Endothelial cell of umbilical vein (primary cell): ENCODE measurements at regions of chr11 and their contacts with region 1.

Region 1: GRCh38 chr11:123560006-123560405 is 94.4 kb downstream of the SCN3B start:
- DNase-seq: no peak
- H3K4me3 ChIP-seq: no peak overlapping the region
- H3K27ac ChIP-seq: no peak overlapping the region
- H3K4me1 ChIP-seq: no peaks in the 10 kb centered on the region
- H3K27me3 ChIP-seq: peaks cover 0 to 9% of the 10 kb centered on the region in 2 experiments
- CTCF ChIP-seq: no peak
- POLR2A ChIP-seq: no peak

Region 2: GRCh38 chr11:123301696-123302400 is 258.2 kb before region 1 on chr11:
- CTCF ChIA-PET with region 1: interaction called, 6 read pairs
- POLR2A ChIA-PET with region 1: no interaction called
- dilution Hi-C with region 1: no loop called
- intact Hi-C with region 1: loop called (anchors 5 kb)
- DNase-seq: peak; percentile 43
- H3K4me3 ChIP-seq: peak overlapping the region in 2 of 3 experiments; percentile 15 to 29
- H3K27ac ChIP-seq: no peak overlapping the region
- H3K4me1 ChIP-seq: peaks cover 17% of the 10 kb centered on the region
- H3K27me3 ChIP-seq: peaks cover 4 to 6% of the 10 kb centered on the region in 2 experiments
- CTCF ChIP-seq: peak; percentile 81 to 84
- POLR2A ChIP-seq: no peak

Region 3: DNA sequence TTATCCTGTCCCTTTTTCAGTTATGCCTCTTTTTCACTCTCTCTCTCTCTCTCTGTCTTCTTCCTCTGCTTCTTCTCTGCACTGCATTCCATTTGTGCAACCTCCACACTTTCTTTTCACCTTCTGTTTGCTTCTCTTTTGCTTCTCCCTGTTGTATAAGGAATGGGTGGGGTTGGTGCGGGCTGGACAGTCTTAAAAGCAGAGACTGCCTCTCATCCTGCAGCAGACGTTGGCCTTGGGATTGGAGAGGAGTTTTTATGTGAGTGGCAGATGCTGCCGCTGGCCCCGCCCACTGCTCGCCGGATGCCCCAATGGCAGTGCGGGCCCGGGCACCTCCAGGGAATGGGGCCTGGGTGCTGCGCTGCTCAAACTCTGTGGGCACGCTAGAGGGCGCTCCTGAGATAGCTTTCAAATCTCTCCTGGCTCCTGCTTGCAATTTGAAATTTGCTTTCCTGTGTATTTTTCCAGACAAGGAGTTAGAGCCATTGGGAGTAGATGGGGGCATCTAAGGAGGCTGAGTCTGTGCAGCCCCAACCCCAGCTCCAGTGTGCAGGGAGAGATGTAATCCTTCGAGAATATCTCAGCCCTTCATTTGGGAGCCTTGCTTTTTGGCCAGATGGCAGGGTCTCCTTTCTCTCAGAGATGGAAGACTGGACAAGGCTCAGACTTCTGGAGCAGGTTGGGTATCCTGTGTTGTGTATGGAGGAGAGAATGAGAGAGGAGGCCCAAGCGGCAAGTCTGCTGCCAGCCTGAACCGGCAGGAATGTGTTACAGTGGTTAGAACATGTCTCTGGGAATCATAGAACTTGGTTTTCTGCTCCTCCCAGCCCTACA is 48.8 kb before region 1 on chr11:
- CTCF ChIA-PET with region 1: interaction called, 22 read pairs
- POLR2A ChIA-PET with region 1: no interaction called
- dilution Hi-C with region 1: no loop called
- intact Hi-C with region 1: loop called (anchors 1 kb)
- DNase-seq: peak; percentile 83
- H3K4me3 ChIP-seq: no peak overlapping the region
- H3K27ac ChIP-seq: no peak overlapping the region
- H3K4me1 ChIP-seq: peaks cover 8% of the 10 kb centered on the region
- H3K27me3 ChIP-seq: no peaks in the 10 kb centered on the region
- CTCF ChIP-seq: peak; percentile 93 to 97
- POLR2A ChIP-seq: no peak

Region 4: GRCh38 chr11:123536690-123537437 is 23.1 kb before region 1 on chr11:
- CTCF ChIA-PET with region 1: interaction called, 14 read pairs
- POLR2A ChIA-PET with region 1: no interaction called
- dilution Hi-C with region 1: no loop called
- intact Hi-C with region 1: no loop called
- DNase-seq: no peak
- H3K4me3 ChIP-seq: no peak overlapping the region
- H3K27ac ChIP-seq: no peak overlapping the region
- H3K4me1 ChIP-seq: no peaks in the 10 kb centered on the region
- H3K27me3 ChIP-seq: no peaks in the 10 kb centered on the region
- CTCF ChIP-seq: no peak
- POLR2A ChIP-seq: no peak

Region 5: DNA sequence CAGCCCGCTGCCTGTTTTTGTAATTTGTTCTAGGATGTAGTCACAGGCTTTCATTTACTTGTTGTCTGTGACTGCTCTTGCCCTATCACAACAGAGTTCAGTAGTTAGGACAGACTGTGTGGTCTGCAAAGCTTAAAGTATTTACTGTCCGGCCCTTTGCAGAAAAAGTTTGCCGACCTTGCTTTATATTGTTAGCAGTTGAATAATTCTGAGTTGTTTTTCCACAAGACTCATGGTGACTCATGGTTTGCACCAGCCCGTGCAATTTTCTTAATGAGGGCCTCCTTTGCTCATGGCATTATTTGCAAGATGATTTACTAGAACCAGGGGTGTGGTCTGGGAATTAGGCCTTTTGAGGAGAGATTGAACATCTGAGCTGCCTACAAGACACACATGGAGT is 16.2 kb before region 1 on chr11:
- CTCF ChIA-PET with region 1: interaction called, 14 read pairs
- POLR2A ChIA-PET with region 1: no interaction called
- dilution Hi-C with region 1: no loop called
- intact Hi-C with region 1: loop called (anchors 1 kb)
- DNase-seq: peak; percentile 52
- H3K4me3 ChIP-seq: no peak overlapping the region
- H3K27ac ChIP-seq: no peak overlapping the region
- H3K4me1 ChIP-seq: no peaks in the 10 kb centered on the region
- H3K27me3 ChIP-seq: no peaks in the 10 kb centered on the region
- CTCF ChIP-seq: no peak
- POLR2A ChIP-seq: no peak

Region 6: DNA sequence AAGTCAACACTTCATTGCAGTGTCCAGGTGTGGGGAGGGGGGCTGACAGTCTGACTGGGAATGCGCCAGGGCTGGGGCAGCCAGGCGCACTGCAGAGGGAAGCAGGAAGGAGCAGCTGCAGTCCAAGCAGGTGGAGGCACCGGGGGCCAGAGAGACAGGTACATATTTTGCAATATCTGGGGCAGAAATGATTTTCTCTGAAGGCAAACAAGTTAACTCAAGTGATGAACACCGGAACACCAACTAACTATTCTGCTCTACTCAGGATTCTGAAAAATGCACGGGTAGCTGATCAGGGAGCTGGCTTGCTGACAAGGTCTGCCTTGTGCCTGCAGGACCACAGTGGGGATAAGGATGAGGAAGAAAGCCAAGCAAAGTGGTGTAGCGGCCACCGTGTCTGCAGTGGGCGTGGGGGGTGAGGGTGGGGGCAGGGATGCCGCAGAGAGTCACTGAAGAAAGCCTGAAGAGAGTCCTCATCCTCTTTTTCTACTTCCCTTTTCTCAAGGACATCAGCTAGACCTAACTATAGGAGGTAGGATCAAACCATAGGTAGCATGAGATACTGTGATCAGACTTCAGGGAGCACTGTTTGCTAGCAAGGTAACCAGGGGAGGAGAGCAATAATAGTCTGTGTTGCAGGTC is 11.1 kb after region 1 on chr11:
- CTCF ChIA-PET with region 1: interaction called, 15 read pairs
- POLR2A ChIA-PET with region 1: no interaction called
- dilution Hi-C with region 1: no loop called
- intact Hi-C with region 1: no loop called
- DNase-seq: no peak
- H3K4me3 ChIP-seq: no peak overlapping the region
- H3K27ac ChIP-seq: no peak overlapping the region
- H3K4me1 ChIP-seq: no peaks in the 10 kb centered on the region
- H3K27me3 ChIP-seq: peaks cover under 1 to 8% of the 10 kb centered on the region in 2 experiments
- CTCF ChIP-seq: no peak
- POLR2A ChIP-seq: no peak

Region 7: DNA sequence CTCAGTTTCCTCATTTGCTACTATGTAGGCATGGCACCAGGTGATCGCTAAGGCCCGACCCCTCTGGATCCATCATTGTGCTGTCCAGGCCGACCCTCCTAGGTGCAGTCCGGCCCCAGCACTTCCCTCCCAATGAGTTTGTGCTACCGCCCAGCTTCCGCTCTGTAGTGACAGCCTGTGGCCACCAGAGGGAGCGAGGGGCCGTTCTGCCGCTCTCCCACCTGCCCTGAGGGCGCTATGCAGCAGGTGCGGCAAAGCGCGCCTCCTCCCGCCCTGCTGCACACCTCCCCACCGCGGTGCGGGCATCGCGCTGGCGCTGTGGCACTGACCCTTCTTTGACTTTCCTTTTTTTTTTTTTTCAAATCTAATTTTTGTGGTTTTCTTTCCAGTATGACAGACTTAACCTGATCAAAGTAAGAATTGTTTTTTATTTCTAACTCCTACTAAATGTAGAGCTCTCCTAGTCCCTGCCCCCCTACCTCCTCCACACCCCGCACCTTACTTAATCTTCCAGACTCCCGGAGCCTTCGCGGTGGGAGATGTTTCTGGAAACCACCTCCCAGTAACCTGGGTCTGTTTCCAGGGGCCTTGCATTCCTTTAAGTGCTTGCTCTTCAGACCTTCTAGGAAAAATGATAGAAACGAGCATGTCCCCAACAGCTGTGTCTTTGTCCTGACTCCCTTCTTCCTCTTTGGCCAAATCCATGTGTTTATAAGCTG is 20.7 kb after region 1 on chr11:
- CTCF ChIA-PET with region 1: interaction called, 15 read pairs
- POLR2A ChIA-PET with region 1: no interaction called
- dilution Hi-C with region 1: no loop called
- intact Hi-C with region 1: no loop called
- DNase-seq: peak; percentile 49
- H3K4me3 ChIP-seq: no peak overlapping the region
- H3K27ac ChIP-seq: no peak overlapping the region
- H3K4me1 ChIP-seq: peaks cover 5% of the 10 kb centered on the region
- H3K27me3 ChIP-seq: peaks cover 2 to 4% of the 10 kb centered on the region in 2 experiments
- CTCF ChIP-seq: peak; percentile 91 to 98
- POLR2A ChIP-seq: no peak